Activated CD8-positive, alpha-beta T cell treated with anti-CD3 and anti-CD28 coated beads, Interleukin-2, amount 10 ng/mL, durations not matched to agents 7 days and 5 days (primary cell): ENCODE measurements at regions of chr11 and their contacts with region 1.

Region 1: DNA sequence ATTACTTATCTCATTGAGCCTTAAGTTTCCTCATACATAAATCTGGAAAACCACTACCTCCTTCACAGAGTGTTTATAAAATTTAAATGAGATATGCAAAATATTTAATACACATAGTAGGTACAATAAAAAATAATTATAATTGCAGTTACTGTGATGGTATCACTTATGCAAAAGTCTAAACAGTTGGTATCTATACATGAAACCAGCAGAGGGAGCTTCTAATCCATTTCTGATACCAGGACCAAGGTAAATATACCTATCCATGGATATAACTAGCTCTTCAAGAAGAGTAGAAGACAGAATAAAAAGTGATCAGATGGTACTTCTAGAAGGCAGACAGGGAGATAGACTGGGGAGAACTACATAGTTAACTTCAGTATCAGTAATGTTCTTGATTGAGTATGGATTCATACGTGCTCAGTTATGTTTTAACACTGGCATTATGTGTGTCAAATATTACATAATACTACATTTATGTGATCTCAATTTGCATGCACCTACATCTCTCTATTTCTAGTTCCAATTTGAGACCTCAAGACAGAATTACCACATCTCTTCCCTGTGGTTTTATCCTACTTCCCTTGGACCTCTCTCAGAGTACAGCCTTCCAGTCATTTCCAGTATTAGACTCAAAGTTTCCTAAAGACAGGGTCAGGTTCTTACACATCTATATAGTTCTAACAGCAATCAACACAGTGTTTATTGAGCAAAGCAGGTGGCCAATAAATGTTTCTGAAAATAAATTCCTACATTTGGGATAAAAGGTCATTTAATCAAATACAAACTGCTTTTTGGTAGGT is 13.7 kb upstream of the TSG101 start:
- DNase-seq: no peak
- ATAC-seq: peak; percentile 81
- H3K4me3 Mint-ChIP-seq: no peak overlapping the region
- H3K27ac Mint-ChIP-seq: no peak overlapping the region
- H3K4me1 Mint-ChIP-seq: no peaks in the 10 kb centered on the region
- H3K27me3 Mint-ChIP-seq: no peaks in the 10 kb centered on the region

Region 2: GRCh38 chr11:18280438-18281045 is 259.9 kb before region 1 on chr11:
- CTCF ChIA-PET with region 1: no interaction called
- POLR2A ChIA-PET with region 1: no interaction called
- DNase-seq: no peak
- ATAC-seq: peak; percentile 67
- H3K4me3 Mint-ChIP-seq: peak overlapping the region; percentile 40
- H3K27ac Mint-ChIP-seq: peak overlapping the region; percentile 78
- H3K4me1 Mint-ChIP-seq: peaks cover 20% of the 10 kb centered on the region
- H3K27me3 Mint-ChIP-seq: no peaks in the 10 kb centered on the region

Region 3: GRCh38 chr11:18526521-18527296 is 13.7 kb before region 1 on chr11 and contains the start of gene TSG101:
- CTCF ChIA-PET with region 1: interaction called, 20 read pairs
- POLR2A ChIA-PET with region 1: interaction called, 4 read pairs
- DNase-seq: peak; percentile 93
- ATAC-seq: peak; percentile 81
- H3K4me3 Mint-ChIP-seq: peak within 1 kb of the TSS; percentile 99
- H3K27ac Mint-ChIP-seq: peak within 1 kb of the TSS; percentile 99
- H3K4me1 Mint-ChIP-seq: peaks cover 33% of the 10 kb centered on the region
- H3K27me3 Mint-ChIP-seq: no peaks in the 10 kb centered on the region
- total RNA-seq, gene TSG101: 33.5 to 48.7 TPM

Region 4: GRCh38 chr11:18650859-18651557 is 110.6 kb after region 1 on chr11:
- CTCF ChIA-PET with region 1: interaction called, 53 read pairs
- POLR2A ChIA-PET with region 1: no interaction called
- DNase-seq: peak; percentile 65
- ATAC-seq: peak; percentile 33
- H3K4me3 Mint-ChIP-seq: no peak overlapping the region
- H3K27ac Mint-ChIP-seq: no peak overlapping the region
- H3K4me1 Mint-ChIP-seq: peaks cover 9% of the 10 kb centered on the region
- H3K27me3 Mint-ChIP-seq: peaks cover 2% of the 10 kb centered on the region